ENCODE measurements at regions of chr12 and their contacts with region 1.

Region 1: GRCh38 chr12:108562348-108563135 is at the start of gene ISCU:
- DNase-seq: peak; percentile 96 to 100
- H3K4me3 ChIP-seq: peak within 1 kb of the TSS; percentile 84 to 100 (median 94)
- H3K27ac ChIP-seq: peak within 1 kb of the TSS; percentile 99
- H3K4me1 ChIP-seq: peaks cover 0 to 4% (median 0%) of the 10 kb centered on the region in 4 experiments; a peak in 1 of 7 replicates
- H3K27me3 ChIP-seq: no peaks in the 10 kb centered on the region
- CTCF ChIP-seq: no peak
- EP300 ChIP-seq: no peak
- POLR2A ChIP-seq: peak; percentile 85 to 94
- RAD21 ChIP-seq: no peak
- total RNA-seq, gene ISCU: 78.1 and 82.3 TPM in 2 replicates

Region 2: DNA sequence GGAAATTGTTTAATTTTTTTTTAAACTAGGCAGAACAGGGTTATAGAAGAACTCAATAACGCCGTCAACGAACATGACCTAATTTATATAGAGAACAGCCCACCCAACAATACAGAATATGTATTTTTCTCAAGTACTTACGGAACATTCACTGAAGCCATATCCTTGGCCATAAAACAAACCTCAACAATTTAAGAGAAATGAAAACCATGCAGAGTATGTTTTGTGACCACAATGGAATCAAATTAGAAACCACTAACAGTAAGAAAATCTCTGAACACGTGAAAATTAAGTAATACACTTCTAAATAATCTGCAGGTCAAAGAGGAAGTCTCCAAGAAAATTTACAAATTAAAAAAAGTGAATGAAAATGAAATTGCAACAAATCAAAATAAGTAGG is 11.0 kb before region 1 on chr12:
- CTCF ChIA-PET with region 1: interaction called, 3 read pairs
- POLR2A ChIA-PET with region 1: interaction called, 40 read pairs
- DNase-seq: no peak
- H3K4me3 ChIP-seq: no peak overlapping the region
- H3K27ac ChIP-seq: no peak overlapping the region
- H3K4me1 ChIP-seq: no peaks in the 10 kb centered on the region
- H3K27me3 ChIP-seq: no peaks in the 10 kb centered on the region
- CTCF ChIP-seq: no peak
- EP300 ChIP-seq: no peak
- POLR2A ChIP-seq: no peak
- RAD21 ChIP-seq: no peak

Region 3: GRCh38 chr12:108576660-108577234 is 14.2 kb after region 1 on chr12:
- CTCF ChIA-PET with region 1: interaction called, 14 read pairs
- POLR2A ChIA-PET with region 1: interaction called, 4 read pairs
- DNase-seq: no peak
- H3K4me3 ChIP-seq: no peak overlapping the region
- H3K27ac ChIP-seq: no peak overlapping the region
- H3K4me1 ChIP-seq: no peaks in the 10 kb centered on the region
- H3K27me3 ChIP-seq: no peaks in the 10 kb centered on the region
- CTCF ChIP-seq: no peak
- EP300 ChIP-seq: no peak
- POLR2A ChIP-seq: no peak
- RAD21 ChIP-seq: no peak

Region 4: DNA sequence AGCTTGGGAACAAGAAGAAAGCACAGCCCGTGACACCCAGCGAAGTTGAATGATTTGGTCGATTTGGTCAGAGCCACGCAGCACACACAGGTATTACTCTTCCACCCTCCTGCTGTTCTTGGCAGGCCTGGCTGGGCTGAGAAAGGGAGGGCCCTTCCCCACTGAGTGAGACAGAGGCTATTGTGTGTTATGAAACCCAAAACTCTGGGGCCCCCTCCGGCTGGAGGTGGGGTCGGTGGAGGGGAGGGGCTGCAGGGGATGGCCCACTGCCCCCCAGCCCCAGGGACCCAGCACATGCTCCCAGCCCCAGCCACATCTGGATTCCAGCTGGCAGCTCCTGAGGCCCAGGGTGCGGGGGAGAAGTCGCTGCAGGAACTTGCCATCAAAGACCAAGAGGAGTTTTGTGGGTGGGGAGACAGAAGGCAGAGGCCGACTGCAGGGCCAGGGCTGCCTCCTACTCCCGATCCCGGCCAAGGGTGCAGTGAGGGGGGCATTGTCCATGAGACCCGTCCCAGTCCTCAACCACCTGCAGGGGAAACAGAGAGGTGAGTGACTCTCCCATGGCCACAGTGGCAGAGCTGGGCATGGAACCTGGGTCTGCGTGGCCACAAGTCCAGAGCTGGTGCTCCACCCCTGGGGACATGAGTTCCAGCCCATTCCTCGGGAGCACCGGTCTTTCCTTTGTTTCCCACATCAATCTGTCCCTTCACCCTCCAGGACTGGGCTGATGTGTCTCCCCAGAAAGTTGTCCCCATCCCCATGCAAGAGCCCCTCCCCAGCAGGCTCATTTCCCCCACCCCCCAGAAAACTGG is 26.7 kb after region 1 on chr12:
- CTCF ChIA-PET with region 1: interaction called, 5 read pairs
- POLR2A ChIA-PET with region 1: interaction called, 10 read pairs
- DNase-seq: no peak
- H3K4me3 ChIP-seq: no peak overlapping the region
- H3K27ac ChIP-seq: peak overlapping the region; percentile 22; the same call in 1 of the 2 replicates
- H3K4me1 ChIP-seq: peaks cover 0 to 17% (median 11%) of the 10 kb centered on the region in 4 experiments; a peak in 6 of 7 replicates
- H3K27me3 ChIP-seq: no peaks in the 10 kb centered on the region
- CTCF ChIP-seq: no peak
- EP300 ChIP-seq: no peak
- POLR2A ChIP-seq: no peak
- RAD21 ChIP-seq: no peak

Region 5: GRCh38 chr12:108611884-108612415 is 49.4 kb after region 1 on chr12:
- CTCF ChIA-PET with region 1: interaction called, 523 read pairs
- POLR2A ChIA-PET with region 1: interaction called, 14 read pairs
- DNase-seq: peak; percentile 53 to 89
- H3K4me3 ChIP-seq: no peak overlapping the region
- H3K27ac ChIP-seq: no peak overlapping the region
- H3K4me1 ChIP-seq: peaks cover 0 to 12% (median 1%) of the 10 kb centered on the region in 4 experiments; a peak in 4 of 7 replicates
- H3K27me3 ChIP-seq: no peaks in the 10 kb centered on the region
- CTCF ChIP-seq: peak; percentile 60 to 92 (median 82)
- EP300 ChIP-seq: no peak
- POLR2A ChIP-seq: no peak
- RAD21 ChIP-seq: peak; percentile 58 to 67

Measured in H1 (cell line).